IMR-90 (cell line): ENCODE measurements at regions of chr10 and their contacts with region 1.

Region 1: DNA sequence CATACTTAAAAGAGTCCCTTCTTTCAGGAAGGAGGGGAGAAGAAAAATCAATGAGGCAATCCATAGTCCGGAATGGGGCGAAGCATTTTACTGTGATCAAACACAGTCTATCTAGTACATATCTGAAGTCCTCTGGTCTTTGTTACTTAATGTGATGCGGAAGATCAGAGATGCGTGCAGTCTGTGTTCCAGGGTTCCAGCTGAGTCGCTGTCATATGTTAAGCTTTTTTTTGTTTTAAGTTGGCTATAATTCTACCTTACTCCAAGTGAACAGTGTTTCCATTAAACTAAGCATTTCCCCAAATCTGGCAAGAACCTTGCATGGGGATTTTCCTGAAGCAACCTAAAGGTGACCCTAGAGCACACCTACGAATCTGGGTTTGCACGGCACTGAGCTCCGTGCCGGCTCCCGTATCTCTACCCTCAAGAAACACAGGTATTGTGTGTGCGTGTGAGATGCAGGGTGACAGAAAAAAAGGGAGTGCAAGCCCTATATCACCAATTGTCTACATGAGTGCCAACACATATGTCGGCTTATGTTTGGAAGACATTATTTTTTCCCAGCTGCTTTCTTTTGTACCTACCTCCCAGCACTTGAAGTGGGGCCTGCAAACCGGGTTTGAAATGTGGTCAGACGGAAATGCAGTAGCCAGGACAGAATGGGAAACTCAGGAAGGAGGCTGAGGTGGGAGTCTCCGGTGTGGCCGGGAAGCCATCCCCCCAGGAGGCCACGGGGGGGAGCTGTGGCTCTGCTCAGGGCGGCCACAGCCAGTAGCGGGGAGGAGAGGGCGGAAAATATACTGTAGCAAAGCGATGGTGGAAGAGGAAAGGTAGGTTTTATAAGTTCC is 435.8 kb upstream of the MGMT start:
- DNase-seq: peak; percentile 12
- ATAC-seq: peak; percentile 98
- H3K4me3 ChIP-seq: no peak overlapping the region
- H3K27ac ChIP-seq: no peak overlapping the region
- H3K4me1 ChIP-seq: no peaks in the 10 kb centered on the region
- H3K27me3 ChIP-seq: no peaks in the 10 kb centered on the region
- CTCF ChIP-seq: peak; percentile 57
- POLR2A ChIP-seq: no peak
- RAD21 ChIP-seq: peak; percentile 73

Region 2: DNA sequence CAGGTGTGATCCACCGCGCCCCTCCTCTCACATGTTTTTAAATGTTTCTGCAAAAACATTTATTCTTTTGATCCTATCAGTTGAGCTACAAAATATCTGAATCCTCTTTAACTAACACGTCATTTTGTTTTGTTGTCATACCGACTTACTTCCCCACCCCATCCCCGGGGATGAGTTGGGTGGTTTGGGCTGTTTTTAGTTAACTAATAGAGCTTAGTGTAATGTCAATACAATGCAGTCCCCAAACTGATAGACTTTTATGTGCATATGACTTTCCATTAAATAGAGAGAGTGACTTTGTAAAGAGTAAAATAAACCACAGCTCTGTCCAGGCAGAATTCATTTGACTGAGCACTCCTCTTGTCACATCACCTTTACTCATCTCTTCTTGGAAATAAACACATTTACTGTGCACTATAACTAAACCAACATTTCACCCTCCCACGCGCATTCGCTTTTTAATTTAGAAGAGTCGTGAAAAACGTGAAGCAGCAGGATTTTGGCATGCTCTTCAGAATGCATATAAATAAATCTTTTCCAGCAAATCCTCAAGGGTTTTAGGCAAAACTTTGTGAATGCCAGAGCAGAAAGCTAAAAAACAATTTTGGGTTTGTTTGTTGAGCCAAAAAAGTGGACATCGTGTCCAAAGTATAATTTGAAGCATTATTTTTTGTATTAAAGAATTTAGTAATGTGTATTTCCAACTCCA is 248.4 kb after region 1 on chr10:
- CTCF ChIA-PET with region 1: no interaction called
- POLR2A ChIA-PET with region 1: no interaction called
- dilution Hi-C with region 1: no loop called
- in situ Hi-C with region 1: no loop called
- intact Hi-C with region 1: loop called (anchors 5 kb)
- DNase-seq: no peak
- ATAC-seq: no peak
- H3K4me3 ChIP-seq: no peak overlapping the region
- H3K27ac ChIP-seq: no peak overlapping the region
- H3K4me1 ChIP-seq: no peaks in the 10 kb centered on the region
- H3K27me3 ChIP-seq: no peaks in the 10 kb centered on the region
- CTCF ChIP-seq: no peak
- POLR2A ChIP-seq: no peak
- RAD21 ChIP-seq: no peak

Region 3: DNA sequence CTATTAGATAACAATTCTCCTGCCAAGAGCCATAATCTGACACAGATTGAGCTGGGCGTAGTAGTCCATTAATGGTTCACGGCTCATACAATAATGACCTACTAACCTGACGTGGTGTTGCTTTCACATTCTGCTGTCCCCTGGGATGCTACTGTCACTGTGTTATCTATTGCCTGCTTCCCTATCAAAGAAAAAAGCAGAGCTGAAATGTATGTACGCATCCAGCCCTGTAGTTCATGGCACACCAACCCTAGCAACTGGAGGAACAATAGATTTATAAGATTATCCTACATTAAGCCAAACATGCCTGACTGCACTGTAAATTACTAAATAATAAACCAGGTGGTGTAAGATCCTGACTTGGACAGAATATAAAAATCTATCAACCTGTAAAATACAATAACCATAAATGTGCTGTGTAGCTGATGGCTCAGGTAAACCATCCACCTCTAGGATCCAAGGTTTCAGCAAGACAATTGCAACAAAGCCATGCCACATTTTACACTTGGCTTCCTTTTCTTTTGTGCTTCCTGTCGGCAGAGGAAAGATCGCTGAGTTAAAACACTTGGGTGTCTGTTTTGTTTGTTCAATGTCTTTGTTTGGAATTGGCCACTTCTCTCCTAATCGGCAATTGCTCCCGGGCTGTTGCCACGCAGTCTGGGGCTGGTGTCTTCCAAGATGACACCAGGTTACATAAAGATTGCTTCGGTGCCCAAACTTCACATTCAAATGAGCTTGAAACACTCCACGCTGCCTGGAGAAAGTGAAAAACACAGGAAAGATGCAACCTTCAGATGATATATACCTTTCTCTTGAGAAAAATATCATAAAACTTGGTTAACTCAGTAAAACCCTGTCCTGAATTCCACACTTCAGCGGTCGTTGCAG is 292.0 kb after region 1 on chr10:
- CTCF ChIA-PET with region 1: no interaction called
- POLR2A ChIA-PET with region 1: no interaction called
- dilution Hi-C with region 1: no loop called
- in situ Hi-C with region 1: no loop called
- intact Hi-C with region 1: loop called (anchors 5 kb)
- DNase-seq: no peak
- ATAC-seq: peak; percentile 18
- H3K4me3 ChIP-seq: peak overlapping the region; percentile 32; the same call in 1 of the 2 replicates
- H3K27ac ChIP-seq: peak overlapping the region; percentile 100
- H3K4me1 ChIP-seq: peaks cover 15% of the 10 kb centered on the region
- H3K27me3 ChIP-seq: no peaks in the 10 kb centered on the region
- CTCF ChIP-seq: no peak
- POLR2A ChIP-seq: no peak
- RAD21 ChIP-seq: no peak

Region 4: DNA sequence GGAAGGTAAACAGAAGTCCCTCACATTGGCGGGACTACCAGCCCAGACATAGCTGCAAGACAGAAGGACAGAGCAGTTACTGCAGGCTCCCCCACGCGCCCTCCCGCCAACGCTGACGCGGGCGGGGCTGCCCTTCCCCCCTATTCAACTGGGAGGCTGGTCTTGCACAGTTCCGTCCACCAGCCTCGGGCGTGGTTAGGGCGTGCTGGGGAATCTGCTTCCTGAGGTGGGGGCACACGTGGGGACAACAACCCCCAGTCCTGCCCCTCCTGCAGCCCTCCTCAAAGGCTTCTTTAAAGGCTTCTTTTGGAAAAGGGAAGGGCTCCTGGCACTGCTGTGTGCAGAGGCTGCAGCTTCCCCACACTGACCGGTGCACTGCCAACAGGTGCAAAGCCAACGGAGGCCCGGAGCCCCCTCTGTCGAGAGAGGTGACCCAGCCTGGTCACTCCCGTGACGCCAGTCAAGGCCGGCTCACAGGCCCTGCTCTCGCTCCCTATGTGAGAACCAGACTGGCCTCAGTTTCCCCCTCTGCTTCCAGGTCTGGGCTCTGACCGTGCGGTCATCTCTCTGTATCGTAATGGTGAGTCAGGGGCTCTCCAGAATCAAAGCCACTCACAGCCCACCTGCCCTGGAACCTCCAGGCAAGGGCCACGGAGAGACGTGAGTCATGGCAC is 806.8 kb after region 1 on chr10:
- CTCF ChIA-PET with region 1: no interaction called
- POLR2A ChIA-PET with region 1: no interaction called
- dilution Hi-C with region 1: no loop called
- in situ Hi-C with region 1: no loop called
- intact Hi-C with region 1: loop called (anchors 2 kb)
- DNase-seq: no peak
- ATAC-seq: no peak
- H3K4me3 ChIP-seq: no peak overlapping the region
- H3K27ac ChIP-seq: no peak overlapping the region
- H3K4me1 ChIP-seq: no peaks in the 10 kb centered on the region
- H3K27me3 ChIP-seq: no peaks in the 10 kb centered on the region
- CTCF ChIP-seq: no peak
- POLR2A ChIP-seq: no peak
- RAD21 ChIP-seq: no peak